B cell (primary cell): ENCODE measurements at regions of chr7 and their contacts with region 1.

Region 1: DNA sequence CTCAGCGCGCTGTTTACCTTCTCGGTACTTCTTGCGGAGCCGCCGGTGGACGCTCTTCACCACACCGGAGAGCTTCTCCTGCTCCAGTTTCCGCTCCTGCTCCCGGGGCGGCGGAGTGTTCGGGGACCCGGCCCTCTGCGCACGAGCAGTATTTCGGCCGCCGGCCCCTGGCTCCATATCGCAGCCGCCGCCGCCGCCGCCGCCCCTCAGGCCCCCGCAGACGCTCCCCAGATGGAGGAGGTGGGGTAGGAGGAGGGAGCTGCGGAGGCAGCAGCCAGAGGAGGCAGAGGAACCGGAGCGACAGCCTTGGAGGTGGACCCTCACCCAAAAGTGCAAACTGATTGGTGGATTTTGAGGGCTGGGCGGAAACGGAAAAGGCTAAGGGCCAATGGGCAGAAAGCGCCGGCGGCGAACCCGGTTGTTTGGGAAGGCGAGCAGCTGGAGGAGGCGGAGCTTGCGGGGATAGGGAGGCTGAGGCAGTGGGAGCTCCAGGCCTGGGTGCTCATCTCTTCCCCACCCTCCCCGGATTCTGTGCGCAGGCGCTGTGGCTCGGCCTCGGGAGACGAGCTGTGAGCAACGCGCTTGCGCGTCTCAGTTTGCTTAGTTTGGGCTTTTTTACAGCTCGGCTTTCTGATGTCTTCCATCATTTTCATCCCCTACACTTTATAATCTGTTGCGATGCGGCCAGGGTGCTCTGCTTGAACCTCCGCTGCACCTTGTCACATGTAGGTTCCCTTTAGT is 146.9 kb downstream of the GPR85 start:
- DNase-seq: peak; percentile 98
- ATAC-seq: peak; percentile 97
- H3K4me3 ChIP-seq: peak overlapping the region; percentile 82 to 96 (median 91)
- H3K4me3 Mint-ChIP-seq: peak overlapping the region; percentile 92
- H3K27ac ChIP-seq: peak overlapping the region; percentile 39 to 74
- H3K27ac Mint-ChIP-seq: peak overlapping the region; percentile 90
- H3K4me1 ChIP-seq: peaks cover 19 to 24% of the 10 kb centered on the region in 2 donors
- H3K4me1 Mint-ChIP-seq: peaks cover 37% of the 10 kb centered on the region
- H3K27me3 ChIP-seq: no peaks in the 10 kb centered on the region
- H3K27me3 Mint-ChIP-seq: no peaks in the 10 kb centered on the region
- CTCF ChIP-seq: no peak

Region 2: DNA sequence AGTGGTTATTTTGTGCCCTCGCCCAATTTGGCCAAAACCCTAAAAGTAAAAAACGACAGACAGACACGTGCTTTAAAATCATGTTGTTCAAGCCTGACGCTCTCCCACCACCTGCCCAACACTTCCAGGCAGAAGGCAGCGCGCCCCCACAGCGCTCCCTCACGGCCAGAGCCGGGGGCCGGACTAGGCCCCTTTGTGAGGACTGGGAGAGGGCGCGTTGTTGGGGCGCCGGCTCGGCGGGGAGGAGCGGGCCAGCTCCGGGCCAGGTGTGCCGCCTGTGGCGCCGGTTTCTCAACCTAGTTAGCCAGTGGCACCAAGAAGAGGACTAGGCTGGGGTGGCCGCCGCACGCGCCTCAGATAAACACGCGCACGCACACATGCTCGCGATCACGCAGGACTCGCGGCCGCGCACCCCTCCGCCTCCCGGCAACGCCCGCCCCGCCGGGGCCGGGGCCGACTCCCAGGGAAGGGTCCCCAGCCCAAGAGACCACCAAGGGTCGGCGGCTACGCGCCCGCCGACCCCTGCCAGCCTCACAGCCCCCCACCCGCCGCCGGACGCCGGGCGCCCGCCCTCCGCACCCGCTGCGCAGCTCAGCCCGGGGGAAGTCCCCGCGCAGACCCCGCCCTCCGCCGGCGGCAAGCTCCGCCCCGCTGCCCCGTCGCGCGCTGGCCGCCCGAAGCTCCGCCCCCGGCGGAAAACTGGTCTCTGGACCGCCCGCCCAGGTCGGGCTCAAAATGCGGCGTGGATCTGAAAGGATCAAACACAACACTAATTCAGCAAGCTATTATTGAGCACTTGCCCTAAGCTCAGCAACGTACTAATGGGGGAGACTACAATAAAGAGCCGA is 1377.6 kb before region 1 on chr7 and contains the start of gene IMMP2L:
- CTCF ChIA-PET with region 1: no interaction called
- POLR2A ChIA-PET with region 1: no interaction called
- intact Hi-C with region 1: loop called (anchors 2 kb)
- DNase-seq: peak; percentile 94
- ATAC-seq: peak; percentile 96
- H3K4me3 ChIP-seq: peak within 1 kb of the TSS; percentile 45 to 74 (median 70)
- H3K4me3 Mint-ChIP-seq: peak within 1 kb of the TSS; percentile 93
- H3K27ac ChIP-seq: peak within 1 kb of the TSS; percentile 48 to 86
- H3K27ac Mint-ChIP-seq: peak within 1 kb of the TSS; percentile 93
- H3K4me1 ChIP-seq: peaks cover 17 to 23% of the 10 kb centered on the region in 2 donors
- H3K4me1 Mint-ChIP-seq: peaks cover 31% of the 10 kb centered on the region
- H3K27me3 ChIP-seq: peaks cover 0 to 7% (median 3%) of the 10 kb centered on the region in 4 experiments
- H3K27me3 Mint-ChIP-seq: peaks cover 8% of the 10 kb centered on the region
- CTCF ChIP-seq: peak; percentile 34
- total RNA-seq, gene IMMP2L: 34.2 and 36.5 TPM in 2 replicates

Region 3: DNA sequence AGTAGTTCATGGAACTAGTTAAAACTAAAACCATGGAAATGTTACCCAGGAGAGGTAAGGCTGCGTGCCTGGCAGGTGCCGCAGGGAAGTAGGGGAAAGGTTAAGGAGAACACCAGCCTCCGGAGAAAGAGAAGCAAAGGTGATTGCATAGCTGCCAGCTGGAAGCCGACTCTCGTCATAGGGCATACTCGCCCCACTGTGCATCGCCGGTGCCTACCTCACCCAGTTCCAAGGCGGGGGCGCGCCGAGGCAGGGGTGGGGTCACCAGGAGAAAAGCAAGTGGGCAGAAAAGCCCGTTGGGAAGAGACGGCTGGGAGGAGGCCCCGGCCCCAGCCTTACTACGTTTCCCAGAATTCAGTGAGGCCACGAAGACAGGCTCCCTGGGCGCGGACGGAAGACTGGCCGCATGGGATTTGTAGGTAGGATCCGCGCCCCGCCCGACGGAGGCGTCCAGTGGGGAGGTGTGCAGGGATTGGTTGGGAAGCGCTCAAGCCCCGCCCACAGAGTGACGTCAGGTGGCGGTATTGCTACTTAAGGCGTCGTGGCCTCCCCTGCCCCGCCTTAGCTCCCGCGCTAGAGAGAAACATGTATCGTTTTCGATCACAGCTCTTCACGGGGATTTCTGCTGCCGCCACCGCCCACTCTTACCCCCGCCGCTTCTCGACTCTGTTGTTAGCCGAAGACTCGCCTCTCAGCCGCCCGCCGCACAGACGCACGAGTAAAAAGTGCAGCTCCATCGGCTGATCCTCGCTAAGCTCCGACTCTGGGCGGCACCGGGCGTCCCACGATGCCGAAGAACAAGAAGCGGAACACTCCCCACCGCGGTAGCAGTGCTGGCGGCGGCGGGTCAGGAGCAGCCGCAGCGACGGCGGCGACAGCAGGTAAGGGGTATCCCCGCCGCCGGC is 489.6 kb before region 1 on chr7 and contains the start of gene IFRD1:
- CTCF ChIA-PET with region 1: no interaction called
- POLR2A ChIA-PET with region 1: interaction called, 7 read pairs
- intact Hi-C with region 1: loop called (anchors 1 kb)
- DNase-seq: peak; percentile 99
- ATAC-seq: peak; percentile 84
- H3K4me3 ChIP-seq: peak within 1 kb of the TSS; percentile 80 to 100 (median 95)
- H3K4me3 Mint-ChIP-seq: peak within 1 kb of the TSS; percentile 95
- H3K27ac ChIP-seq: peak within 1 kb of the TSS; percentile 98 to 99
- H3K27ac Mint-ChIP-seq: peak within 1 kb of the TSS; percentile 98
- H3K4me1 ChIP-seq: peaks cover 16 to 19% of the 10 kb centered on the region in 2 donors
- H3K4me1 Mint-ChIP-seq: peaks cover 38% of the 10 kb centered on the region
- H3K27me3 ChIP-seq: no peaks in the 10 kb centered on the region
- H3K27me3 Mint-ChIP-seq: no peaks in the 10 kb centered on the region
- CTCF ChIP-seq: no peak
- total RNA-seq, gene IFRD1: 101 and 106 TPM in 2 replicates

Region 4: GRCh38 chr7:112707655-112708054 is 232.1 kb before region 1 on chr7:
- CTCF ChIA-PET with region 1: no interaction called
- POLR2A ChIA-PET with region 1: no interaction called
- intact Hi-C with region 1: no loop called
- DNase-seq: no peak
- ATAC-seq: no peak
- H3K4me3 ChIP-seq: no peak overlapping the region
- H3K4me3 Mint-ChIP-seq: no peak overlapping the region
- H3K27ac ChIP-seq: no peak overlapping the region
- H3K27ac Mint-ChIP-seq: no peak overlapping the region
- H3K4me1 ChIP-seq: peaks cover 0 to 5% of the 10 kb centered on the region in 2 donors
- H3K4me1 Mint-ChIP-seq: peaks cover 8% of the 10 kb centered on the region
- H3K27me3 ChIP-seq: no peaks in the 10 kb centered on the region
- H3K27me3 Mint-ChIP-seq: no peaks in the 10 kb centered on the region
- CTCF ChIP-seq: no peak

Region 5: GRCh38 chr7:112789817-112790585 is 149.7 kb before region 1 on chr7 and contains the start of gene TMEM168:
- CTCF ChIA-PET with region 1: no interaction called
- POLR2A ChIA-PET with region 1: interaction called, 4 read pairs
- intact Hi-C with region 1: loop called (anchors 1 kb)
- DNase-seq: peak; percentile 92
- ATAC-seq: peak; percentile 83
- H3K4me3 ChIP-seq: peak within 1 kb of the TSS; percentile 83 to 96 (median 90)
- H3K4me3 Mint-ChIP-seq: peak within 1 kb of the TSS; percentile 92
- H3K27ac ChIP-seq: peak within 1 kb of the TSS; percentile 91 to 93
- H3K27ac Mint-ChIP-seq: peak within 1 kb of the TSS; percentile 92
- H3K4me1 ChIP-seq: peaks cover 16 to 23% of the 10 kb centered on the region in 2 donors
- H3K4me1 Mint-ChIP-seq: peaks cover 43% of the 10 kb centered on the region
- H3K27me3 ChIP-seq: no peaks in the 10 kb centered on the region
- H3K27me3 Mint-ChIP-seq: no peaks in the 10 kb centered on the region
- CTCF ChIP-seq: no peak
- total RNA-seq, gene TMEM168: 30.0 and 31.8 TPM in 2 replicates

Region 6: DNA sequence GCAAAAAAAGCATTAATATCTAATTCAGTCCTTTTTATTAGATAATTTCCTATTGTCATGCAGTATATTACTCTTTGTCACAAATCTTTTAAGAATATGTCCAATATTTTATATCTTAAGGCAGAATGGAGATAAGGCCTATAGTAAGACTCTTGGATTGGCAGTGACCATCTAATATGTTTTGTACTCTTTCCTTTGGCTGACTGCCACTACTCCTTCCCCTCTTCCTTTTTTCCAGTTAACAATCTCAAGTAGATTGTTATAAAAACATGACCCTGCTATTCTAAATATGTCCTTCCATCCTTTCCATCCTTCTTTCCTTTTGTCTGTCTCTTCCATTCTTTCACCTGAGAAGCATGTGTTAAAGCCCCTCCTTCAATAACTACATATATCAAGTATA is 56.8 kb before region 1 on chr7:
- CTCF ChIA-PET with region 1: no interaction called
- POLR2A ChIA-PET with region 1: no interaction called
- intact Hi-C with region 1: loop called (anchors 1 kb)
- DNase-seq: no peak
- ATAC-seq: no peak
- H3K4me3 ChIP-seq: no peak overlapping the region
- H3K4me3 Mint-ChIP-seq: no peak overlapping the region
- H3K27ac ChIP-seq: peak overlapping the region in 1 of 2 donors; percentile 10
- H3K27ac Mint-ChIP-seq: peak overlapping the region; percentile 66
- H3K4me1 ChIP-seq: peaks cover 14 to 17% of the 10 kb centered on the region in 2 donors
- H3K4me1 Mint-ChIP-seq: peaks cover 33% of the 10 kb centered on the region
- H3K27me3 ChIP-seq: no peaks in the 10 kb centered on the region
- H3K27me3 Mint-ChIP-seq: no peaks in the 10 kb centered on the region
- CTCF ChIP-seq: no peak

Region 7: GRCh38 chr7:112898432-112899290 is 41.1 kb before region 1 on chr7:
- CTCF ChIA-PET with region 1: no interaction called
- POLR2A ChIA-PET with region 1: no interaction called
- intact Hi-C with region 1: loop called (anchors 5 kb)
- DNase-seq: peak; percentile 70
- ATAC-seq: peak; percentile 54
- H3K4me3 ChIP-seq: no peak overlapping the region
- H3K4me3 Mint-ChIP-seq: no peak overlapping the region
- H3K27ac ChIP-seq: no peak overlapping the region
- H3K27ac Mint-ChIP-seq: no peak overlapping the region
- H3K4me1 ChIP-seq: no peaks in the 10 kb centered on the region
- H3K4me1 Mint-ChIP-seq: peaks cover 8% of the 10 kb centered on the region
- H3K27me3 ChIP-seq: no peaks in the 10 kb centered on the region
- H3K27me3 Mint-ChIP-seq: no peaks in the 10 kb centered on the region
- CTCF ChIP-seq: peak; percentile 91

Region 8: GRCh38 chr7:113118074-113118959 is 178.6 kb after region 1 on chr7 and contains the start of gene SMIM30:
- CTCF ChIA-PET with region 1: no interaction called
- POLR2A ChIA-PET with region 1: no interaction called
- intact Hi-C with region 1: loop called (anchors 1 kb)
- DNase-seq: peak; percentile 91
- ATAC-seq: peak; percentile 100
- H3K4me3 ChIP-seq: peak within 1 kb of the TSS; percentile 40 to 88 (median 69)
- H3K4me3 Mint-ChIP-seq: peak within 1 kb of the TSS; percentile 96
- H3K27ac ChIP-seq: peak within 1 kb of the TSS; percentile 62 to 87
- H3K27ac Mint-ChIP-seq: peak within 1 kb of the TSS; percentile 95
- H3K4me1 ChIP-seq: peaks cover 8 to 11% of the 10 kb centered on the region in 2 donors
- H3K4me1 Mint-ChIP-seq: peaks cover 23% of the 10 kb centered on the region
- H3K27me3 ChIP-seq: no peaks in the 10 kb centered on the region
- H3K27me3 Mint-ChIP-seq: no peaks in the 10 kb centered on the region
- CTCF ChIP-seq: no peak
- total RNA-seq, gene SMIM30: 21.0 and 24.4 TPM in 2 replicates